ENCODE measurements at regions of chr2 and their contacts with region 1.

Region 1: DNA sequence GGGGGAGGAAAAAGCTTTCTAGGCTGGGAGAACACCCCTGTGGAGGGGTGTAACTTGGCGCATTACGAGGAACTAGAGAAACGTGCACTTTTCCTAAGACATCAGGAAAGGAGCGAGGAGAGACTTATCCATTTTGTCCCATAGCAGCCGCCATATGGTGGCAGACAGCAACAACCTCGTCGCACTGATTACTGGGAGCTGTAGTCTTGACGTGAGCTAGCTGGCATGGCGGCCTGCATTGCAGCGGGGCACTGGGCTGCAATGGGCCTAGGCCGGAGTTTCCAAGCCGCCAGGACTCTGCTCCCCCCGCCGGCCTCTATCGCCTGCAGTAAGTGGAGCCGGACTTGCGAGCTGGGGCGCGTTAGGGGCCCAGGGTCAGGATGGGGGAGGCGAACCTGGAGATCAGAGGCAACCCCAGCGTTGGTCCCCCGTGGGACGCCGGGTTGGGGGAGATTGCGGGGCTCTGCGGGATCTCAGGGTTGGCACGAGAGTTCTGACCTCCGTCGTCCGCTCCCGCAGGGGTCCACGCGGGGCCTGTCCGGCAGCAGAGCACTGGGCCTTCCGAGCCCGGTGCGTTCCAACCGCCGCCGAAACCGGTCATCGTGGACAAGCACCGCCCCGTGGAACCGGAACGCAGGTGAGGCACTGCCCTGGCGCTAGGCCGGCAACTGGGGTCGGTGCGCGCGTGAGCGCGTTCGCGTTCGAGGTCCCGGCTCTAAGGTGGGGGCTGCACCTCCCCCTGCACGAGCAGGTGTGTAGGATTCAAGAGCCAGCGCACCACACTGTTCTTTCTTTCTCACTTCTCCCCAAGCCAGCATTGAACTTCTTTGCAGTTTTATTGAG is at the start of gene MRPL19:
- DNase-seq: peak; percentile 84
- ATAC-seq: peak; percentile 98
- H3K4me3 Mint-ChIP-seq: peak within 1 kb of the TSS; percentile 93
- H3K27ac Mint-ChIP-seq: peak within 1 kb of the TSS; percentile 92
- H3K4me1 Mint-ChIP-seq: peaks cover 30% of the 10 kb centered on the region
- H3K27me3 Mint-ChIP-seq: no peaks in the 10 kb centered on the region
- total RNA-seq, gene MRPL19: 39.5 to 42.4 TPM

Region 2: GRCh38 chr2:75710577-75711253 is 63.9 kb after region 1 on chr2 and contains the start of gene GCFC2:
- CTCF ChIA-PET with region 1: interaction called, 6 read pairs
- POLR2A ChIA-PET with region 1: interaction called, 11 read pairs
- DNase-seq: peak; percentile 87
- ATAC-seq: peak; percentile 95
- H3K4me3 Mint-ChIP-seq: peak within 1 kb of the TSS; percentile 90
- H3K27ac Mint-ChIP-seq: peak within 1 kb of the TSS; percentile 97
- H3K4me1 Mint-ChIP-seq: peaks cover 18% of the 10 kb centered on the region
- H3K27me3 Mint-ChIP-seq: peaks cover 3% of the 10 kb centered on the region
- total RNA-seq, gene GCFC2: 20.6 to 21.9 TPM

Measured in activated CD8-positive, alpha-beta T cell treated with anti-CD3 and anti-CD28 coated beads, Interleukin-2, amount 10 ng/mL, durations not matched to agents 7 days and 5 days (primary cell).